Activated naive CD4-positive, alpha-beta T cell treated with anti-CD3 and anti-CD28 coated beads, Interleukin-2, amount 10 ng/mL, durations not matched to agents 7 days and 5 days (primary cell): ENCODE measurements at regions of chr11 and their contacts with region 1.

Region 1: GRCh38 chr11:27698872-27699474 is 1.3 kb downstream of the BDNF start:
- DNase-seq: peak; percentile 73
- H3K4me3 Mint-ChIP-seq: peak overlapping the region; percentile 32
- H3K27ac Mint-ChIP-seq: no peak overlapping the region
- H3K4me1 Mint-ChIP-seq: peaks cover 23% of the 10 kb centered on the region
- H3K27me3 Mint-ChIP-seq: peaks cover 62% of the 10 kb centered on the region

Region 2: DNA sequence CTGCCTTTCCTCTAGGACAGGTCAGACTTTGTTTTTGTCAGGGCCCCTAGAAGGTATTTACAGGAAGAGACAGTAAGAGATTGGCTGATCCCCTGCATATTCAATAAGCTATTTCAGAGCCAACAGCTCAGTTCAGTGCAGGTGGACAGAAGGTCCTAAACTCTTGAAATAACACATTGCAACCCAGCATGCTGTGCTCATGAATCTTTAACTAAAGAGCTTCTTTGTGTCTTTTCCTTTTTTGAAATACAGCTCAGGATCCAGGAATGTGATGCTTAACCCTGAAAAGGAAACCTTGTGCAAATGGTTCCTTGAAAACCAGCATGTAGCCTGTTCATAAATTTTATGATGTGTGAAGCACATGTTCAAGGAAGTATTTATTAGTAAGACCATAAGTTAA is 614.5 kb before region 1 on chr11:
- CTCF ChIA-PET with region 1: no interaction called
- DNase-seq: no peak
- H3K4me3 Mint-ChIP-seq: no peak overlapping the region
- H3K27ac Mint-ChIP-seq: no peak overlapping the region
- H3K4me1 Mint-ChIP-seq: no peaks in the 10 kb centered on the region
- H3K27me3 Mint-ChIP-seq: no peaks in the 10 kb centered on the region

Region 3: GRCh38 chr11:27783701-27784355 is 84.9 kb after region 1 on chr11:
- CTCF ChIA-PET with region 1: no interaction called
- DNase-seq: no peak
- H3K4me3 Mint-ChIP-seq: no peak overlapping the region
- H3K27ac Mint-ChIP-seq: no peak overlapping the region
- H3K4me1 Mint-ChIP-seq: no peaks in the 10 kb centered on the region
- H3K27me3 Mint-ChIP-seq: no peaks in the 10 kb centered on the region

Region 4: GRCh38 chr11:28529540-28530410 is 830.8 kb after region 1 on chr11:
- CTCF ChIA-PET with region 1: interaction called, 33 read pairs
- DNase-seq: no peak
- H3K4me3 Mint-ChIP-seq: no peak overlapping the region
- H3K27ac Mint-ChIP-seq: no peak overlapping the region
- H3K4me1 Mint-ChIP-seq: no peaks in the 10 kb centered on the region
- H3K27me3 Mint-ChIP-seq: no peaks in the 10 kb centered on the region